Activated CD8-positive, alpha-beta T cell treated with anti-CD3 and anti-CD28 coated beads, Interleukin-2, amount 10 ng/mL, durations not matched to agents 7 days and 5 days (primary cell): ENCODE measurements at regions of chr11 and their contacts with region 1.

Region 1: GRCh38 chr11:46616998-46617675 is at the starts of genes ATG13 and HARBI1:
- DNase-seq: peak; percentile 93
- ATAC-seq: peak; percentile 97
- H3K4me3 Mint-ChIP-seq: peak within 1 kb of the TSS; percentile 90
- H3K27ac Mint-ChIP-seq: peak within 1 kb of the TSS; percentile 99
- H3K4me1 Mint-ChIP-seq: peaks cover 36% of the 10 kb centered on the region
- H3K27me3 Mint-ChIP-seq: no peaks in the 10 kb centered on the region
- total RNA-seq, gene ATG13: 57.8 to 58.4 TPM
- total RNA-seq, gene HARBI1: 5.0 to 6.7 TPM

Region 2: GRCh38 chr11:46489661-46490560 is 127.2 kb before region 1 on chr11:
- CTCF ChIA-PET with region 1: interaction called, 21 read pairs
- POLR2A ChIA-PET with region 1: no interaction called
- DNase-seq: peak; percentile 60
- ATAC-seq: peak; percentile 85
- H3K4me3 Mint-ChIP-seq: no peak overlapping the region
- H3K27ac Mint-ChIP-seq: no peak overlapping the region
- H3K4me1 Mint-ChIP-seq: peaks cover 5% of the 10 kb centered on the region
- H3K27me3 Mint-ChIP-seq: no peaks in the 10 kb centered on the region

Region 3: GRCh38 chr11:46529095-46529905 is 87.8 kb before region 1 on chr11:
- CTCF ChIA-PET with region 1: interaction called, 11 read pairs
- POLR2A ChIA-PET with region 1: no interaction called
- DNase-seq: peak; percentile 85
- ATAC-seq: peak; percentile 92
- H3K4me3 Mint-ChIP-seq: no peak overlapping the region
- H3K27ac Mint-ChIP-seq: no peak overlapping the region
- H3K4me1 Mint-ChIP-seq: peaks cover 17% of the 10 kb centered on the region
- H3K27me3 Mint-ChIP-seq: no peaks in the 10 kb centered on the region

Region 4: GRCh38 chr11:46560300-46560991 is 56.7 kb before region 1 on chr11:
- CTCF ChIA-PET with region 1: interaction called, 27 read pairs
- POLR2A ChIA-PET with region 1: interaction called, 4 read pairs
- DNase-seq: peak; percentile 61
- ATAC-seq: peak; percentile 83
- H3K4me3 Mint-ChIP-seq: peak overlapping the region; percentile 89
- H3K27ac Mint-ChIP-seq: peak overlapping the region; percentile 96
- H3K4me1 Mint-ChIP-seq: peaks cover 58% of the 10 kb centered on the region
- H3K27me3 Mint-ChIP-seq: no peaks in the 10 kb centered on the region

Region 5: DNA sequence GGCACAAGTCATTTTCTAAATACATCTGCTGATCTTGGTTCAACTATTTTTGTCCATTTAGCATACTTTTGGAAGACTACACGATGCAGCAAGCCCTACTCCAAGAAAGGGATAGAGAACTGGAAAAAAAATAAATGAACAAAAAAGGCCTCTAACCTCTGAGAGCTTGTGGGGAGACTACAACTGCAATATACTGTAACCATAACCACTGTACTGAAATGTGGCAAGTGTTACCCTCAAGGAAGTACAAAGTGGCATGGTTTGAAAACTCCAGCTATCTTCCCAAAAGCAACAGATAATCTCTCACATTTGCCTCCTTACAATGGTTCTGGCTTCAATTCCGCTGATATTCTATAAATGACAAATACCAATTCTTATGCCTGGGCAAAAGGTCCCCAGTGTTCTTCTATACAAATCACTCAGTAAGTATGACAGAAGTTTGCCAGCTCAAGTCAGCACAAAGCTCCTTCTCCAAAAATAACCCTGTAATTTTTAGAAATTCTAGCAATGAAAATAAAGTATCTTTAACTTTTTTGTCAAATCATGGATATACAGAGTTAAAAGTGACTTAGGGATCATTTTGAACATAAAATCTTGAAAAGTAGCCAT is 46.2 kb before region 1 on chr11:
- CTCF ChIA-PET with region 1: interaction called, 12 read pairs
- POLR2A ChIA-PET with region 1: no interaction called
- DNase-seq: no peak
- ATAC-seq: peak; percentile 72
- H3K4me3 Mint-ChIP-seq: no peak overlapping the region
- H3K27ac Mint-ChIP-seq: peak overlapping the region; percentile 18
- H3K4me1 Mint-ChIP-seq: peaks cover 29% of the 10 kb centered on the region
- H3K27me3 Mint-ChIP-seq: no peaks in the 10 kb centered on the region

Region 6: DNA sequence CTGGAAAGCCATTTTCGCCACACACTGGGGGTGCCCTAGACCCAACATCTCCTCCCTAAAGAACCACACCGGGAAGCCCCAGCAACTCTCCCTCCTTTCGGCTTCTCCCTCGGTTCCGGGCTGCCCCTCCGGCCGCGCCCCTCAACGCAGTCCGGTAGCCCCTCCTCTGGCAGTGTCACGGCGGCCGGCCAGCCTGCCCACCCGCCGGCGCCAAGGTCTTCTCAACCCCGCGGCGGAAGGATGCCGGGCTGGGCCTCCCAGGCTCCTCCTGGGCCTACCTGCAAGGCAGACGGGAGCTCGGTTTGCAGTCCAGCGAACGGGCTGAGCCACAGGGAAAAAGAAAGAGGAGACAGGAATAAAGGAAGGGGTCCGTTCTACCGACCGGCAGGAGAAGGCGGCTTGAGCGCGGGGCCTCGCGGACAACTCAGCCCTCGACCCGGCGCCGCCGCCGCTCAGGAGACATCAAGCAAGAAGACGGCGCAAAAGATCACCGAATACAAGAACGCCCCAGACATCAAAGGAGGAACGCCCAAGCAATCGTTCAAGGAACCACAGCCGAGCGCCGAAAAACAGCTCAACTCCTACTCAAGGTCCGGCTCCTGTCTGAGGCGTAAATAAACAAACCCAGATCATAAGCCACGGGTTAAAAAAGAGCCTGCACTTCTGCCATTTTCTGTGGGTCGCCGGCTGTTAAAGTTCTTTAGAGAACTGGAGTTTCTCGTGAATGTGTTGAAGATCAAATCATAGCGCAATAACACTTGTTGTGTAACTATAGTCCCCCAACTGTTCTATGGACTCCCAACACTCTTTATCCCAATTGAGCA is 23.4 kb before region 1 on chr11 and contains the start of gene AMBRA1:
- CTCF ChIA-PET with region 1: interaction called, 17 read pairs
- POLR2A ChIA-PET with region 1: interaction called, 27 read pairs
- DNase-seq: peak; percentile 92
- ATAC-seq: peak; percentile 92
- H3K4me3 Mint-ChIP-seq: peak within 1 kb of the TSS; percentile 94
- H3K27ac Mint-ChIP-seq: peak within 1 kb of the TSS; percentile 93
- H3K4me1 Mint-ChIP-seq: peaks cover 52% of the 10 kb centered on the region
- H3K27me3 Mint-ChIP-seq: no peaks in the 10 kb centered on the region
- total RNA-seq, gene AMBRA1: 34.0 to 35.1 TPM

Region 7: DNA sequence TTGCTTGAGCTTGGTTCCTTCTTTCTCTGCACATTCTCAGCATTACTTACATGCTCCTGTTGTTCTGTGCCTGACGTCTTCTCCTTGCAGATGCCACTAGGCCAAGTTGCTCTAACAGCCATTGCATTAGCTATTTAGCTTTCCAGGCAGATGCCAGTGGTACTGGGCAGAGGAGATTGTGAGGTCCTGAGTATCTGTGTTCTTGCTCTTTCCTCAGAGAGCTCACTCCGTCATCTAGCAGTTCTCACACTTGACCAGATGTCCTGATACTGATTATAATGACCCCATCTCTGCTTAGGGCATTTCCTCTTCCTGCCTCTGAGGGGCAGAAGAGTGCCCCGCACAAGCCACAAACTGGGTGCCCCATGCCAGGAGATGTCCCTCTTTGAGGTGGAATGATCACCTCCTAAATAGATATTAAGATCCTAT is 52.6 kb after region 1 on chr11:
- CTCF ChIA-PET with region 1: interaction called, 16 read pairs
- POLR2A ChIA-PET with region 1: interaction called, 3 read pairs
- DNase-seq: no peak
- ATAC-seq: no peak
- H3K4me3 Mint-ChIP-seq: no peak overlapping the region
- H3K27ac Mint-ChIP-seq: peak overlapping the region; percentile 77
- H3K4me1 Mint-ChIP-seq: peaks cover 50% of the 10 kb centered on the region
- H3K27me3 Mint-ChIP-seq: no peaks in the 10 kb centered on the region